ENCODE measurements at regions of chr2 and their contacts with region 1.

Region 1: GRCh38 chr2:102005989-102006885 is 14.5 kb downstream of the IL1R2 start:
- DNase-seq: peak; percentile 68 to 84 (median 76)
- H3K4me3 ChIP-seq: no peak overlapping the region
- H3K27ac ChIP-seq: no peak overlapping the region
- H3K4me1 ChIP-seq: peaks cover 0 to 17% (median 10%) of the 10 kb centered on the region in 4 experiments
- H3K27me3 ChIP-seq: no peaks in the 10 kb centered on the region

Region 2: GRCh38 chr2:101597351-101597944 is 408.8 kb before region 1 on chr2:
- CTCF ChIA-PET with region 1: no interaction called
- POLR2A ChIA-PET with region 1: no interaction called
- DNase-seq: no peak
- H3K4me3 ChIP-seq: no peak overlapping the region
- H3K27ac ChIP-seq: no peak overlapping the region
- H3K4me1 ChIP-seq: no peaks in the 10 kb centered on the region
- H3K27me3 ChIP-seq: no peaks in the 10 kb centered on the region

Region 3: GRCh38 chr2:101921319-101921952 is 84.8 kb before region 1 on chr2:
- CTCF ChIA-PET with region 1: no interaction called
- POLR2A ChIA-PET with region 1: no interaction called
- DNase-seq: peak; percentile 42 to 91 (median 88)
- H3K4me3 ChIP-seq: no peak overlapping the region
- H3K27ac ChIP-seq: peak overlapping the region in 1 of 2 experiments; percentile 30
- H3K4me1 ChIP-seq: peaks cover 0 to 12% (median 7%) of the 10 kb centered on the region in 4 experiments
- H3K27me3 ChIP-seq: no peaks in the 10 kb centered on the region

Region 4: GRCh38 chr2:102442967-102443828 is 437.0 kb after region 1 on chr2:
- CTCF ChIA-PET with region 1: interaction called, 13 read pairs
- POLR2A ChIA-PET with region 1: no interaction called
- DNase-seq: peak; percentile 53 to 69 (median 59)
- H3K4me3 ChIP-seq: peak overlapping the region in 1 of 7 experiments; percentile 49
- H3K27ac ChIP-seq: no peak overlapping the region
- H3K4me1 ChIP-seq: peaks cover 4 to 15% (median 5%) of the 10 kb centered on the region in 4 experiments
- H3K27me3 ChIP-seq: no peaks in the 10 kb centered on the region

Measured in common myeloid progenitor, CD34-positive (primary cell).